Mammary epithelial cell (primary cell): ENCODE measurements at regions of chr3 and their contacts with region 1.

Region 1: DNA sequence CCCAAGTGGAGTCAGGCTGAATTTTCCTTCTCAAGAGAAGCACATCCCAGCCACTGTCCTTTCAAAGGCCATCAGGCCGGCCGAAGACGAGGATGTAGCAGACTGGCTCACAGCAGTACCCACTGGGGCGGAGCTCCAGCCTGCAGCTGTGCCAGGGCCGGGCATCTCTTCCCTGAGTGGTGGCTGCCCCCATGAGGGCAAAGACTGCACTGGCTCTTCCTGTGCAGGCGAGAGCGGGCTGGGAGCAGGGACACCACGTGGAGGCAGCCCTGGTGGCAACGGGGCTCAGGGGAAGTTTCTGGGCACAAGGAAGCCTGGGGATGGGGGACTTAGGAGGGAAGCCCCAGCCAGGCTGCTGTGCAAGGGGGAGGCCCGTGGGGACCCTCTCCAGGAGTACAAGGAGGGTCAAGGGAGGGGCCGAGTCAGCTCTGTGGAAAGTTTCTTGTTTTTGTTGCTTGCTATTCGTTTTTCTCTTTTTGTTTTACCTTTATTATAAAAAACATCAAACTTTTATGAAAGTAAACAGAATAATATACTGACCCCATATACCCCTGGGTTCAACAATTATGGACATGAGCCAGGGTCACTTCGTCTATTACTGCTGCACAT is 66.1 kb downstream of the RPN1 start:
- DNase-seq: peak; percentile 67
- H3K4me3 ChIP-seq: no peak overlapping the region
- H3K27ac ChIP-seq: no peak overlapping the region
- H3K4me1 ChIP-seq: peaks cover 2% of the 10 kb centered on the region
- H3K27me3 ChIP-seq: no peaks in the 10 kb centered on the region
- CTCF ChIP-seq: peak; percentile 84 to 94

Region 2: DNA sequence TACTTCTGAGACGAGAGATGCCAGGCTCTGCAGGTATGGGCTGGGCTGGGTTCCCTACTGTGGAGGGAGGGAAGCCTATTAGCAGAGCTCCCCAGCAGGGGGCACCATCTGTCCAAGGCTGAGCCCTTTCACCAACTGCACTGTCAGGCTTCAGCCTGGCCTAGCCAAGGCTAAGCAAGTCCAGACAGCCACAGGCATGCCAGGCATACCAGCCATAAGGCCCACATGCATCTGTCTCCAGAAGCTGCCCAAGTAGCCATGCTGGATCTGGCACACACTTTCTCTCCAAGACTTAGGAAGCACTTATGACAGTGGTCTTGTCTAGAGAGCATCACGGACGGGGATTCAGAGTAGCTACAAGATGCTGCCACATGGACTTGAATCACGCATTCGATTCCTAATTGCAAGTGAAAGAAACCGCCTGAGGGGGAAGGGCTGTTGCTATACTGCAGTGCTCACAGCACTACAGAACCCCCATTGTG is 489.3 kb before region 1 on chr3:
- CTCF ChIA-PET with region 1: no interaction called
- dilution Hi-C with region 1: loop called (anchors 10 kb)
- in situ Hi-C with region 1: loop called (anchors 10 kb)
- intact Hi-C with region 1: loop called (anchors 1 kb)
- DNase-seq: peak; percentile 86
- H3K4me3 ChIP-seq: no peak overlapping the region
- H3K27ac ChIP-seq: no peak overlapping the region
- H3K4me1 ChIP-seq: peaks cover 21% of the 10 kb centered on the region
- H3K27me3 ChIP-seq: no peaks in the 10 kb centered on the region
- CTCF ChIP-seq: peak; percentile 90 to 98

Region 3: DNA sequence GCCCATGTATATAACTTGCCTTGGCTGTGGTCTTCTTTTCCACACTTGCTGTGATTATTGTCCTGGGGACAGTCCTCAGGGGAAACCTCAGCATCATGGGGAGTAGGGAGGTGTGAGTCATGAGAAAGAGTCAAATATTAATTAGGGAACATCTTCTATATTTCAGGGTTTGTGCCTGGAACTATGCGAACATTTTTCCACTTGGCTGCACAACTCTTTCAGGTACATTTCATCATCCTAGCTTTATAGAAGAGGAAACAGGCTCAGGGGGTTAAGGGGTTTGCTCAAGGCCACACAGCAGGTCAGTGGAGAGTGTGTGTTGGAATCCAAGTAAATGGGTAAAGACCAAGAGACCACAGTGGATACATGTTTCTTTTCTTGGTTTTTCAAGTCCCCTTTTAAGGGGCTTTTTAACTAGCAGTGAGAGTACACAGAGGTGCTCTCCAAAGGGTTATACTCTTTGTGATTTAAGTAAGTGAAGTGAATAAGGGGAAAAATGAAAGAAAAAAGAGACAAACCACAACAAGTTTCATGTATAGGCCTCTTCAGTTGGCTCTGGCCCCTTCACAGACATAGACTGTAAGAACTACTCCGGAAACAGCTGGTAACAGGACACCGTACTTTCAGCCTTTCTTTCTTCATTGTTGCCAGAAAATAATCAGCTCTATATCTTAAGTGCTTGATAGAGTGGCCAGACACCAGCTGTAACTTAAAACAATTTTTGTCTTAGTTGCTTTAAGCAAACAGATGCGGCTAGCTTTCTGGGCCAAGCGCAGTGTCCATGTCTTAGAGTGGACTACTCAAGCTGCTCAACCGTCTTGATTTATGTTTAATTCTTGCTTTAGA is 366.6 kb before region 1 on chr3:
- CTCF ChIA-PET with region 1: no interaction called
- dilution Hi-C with region 1: no loop called
- in situ Hi-C with region 1: no loop called
- intact Hi-C with region 1: loop called (anchors 5 kb)
- DNase-seq: no peak
- H3K4me3 ChIP-seq: no peak overlapping the region
- H3K27ac ChIP-seq: no peak overlapping the region
- H3K4me1 ChIP-seq: no peaks in the 10 kb centered on the region
- H3K27me3 ChIP-seq: no peaks in the 10 kb centered on the region
- CTCF ChIP-seq: no peak

Region 4: GRCh38 chr3:128416578-128417211 is 167.8 kb before region 1 on chr3:
- CTCF ChIA-PET with region 1: no interaction called
- dilution Hi-C with region 1: loop called (anchors 25 kb)
- in situ Hi-C with region 1: no loop called
- intact Hi-C with region 1: no loop called
- DNase-seq: peak; percentile 77
- H3K4me3 ChIP-seq: no peak overlapping the region
- H3K27ac ChIP-seq: no peak overlapping the region
- H3K4me1 ChIP-seq: peaks cover 8% of the 10 kb centered on the region
- H3K27me3 ChIP-seq: no peaks in the 10 kb centered on the region
- CTCF ChIP-seq: no peak

Region 5: GRCh38 chr3:128438488-128439072 is 145.9 kb before region 1 on chr3:
- CTCF ChIA-PET with region 1: no interaction called
- dilution Hi-C with region 1: no loop called
- in situ Hi-C with region 1: loop called (anchors 10 to 25 kb)
- intact Hi-C with region 1: no loop called
- DNase-seq: no peak
- H3K4me3 ChIP-seq: no peak overlapping the region
- H3K27ac ChIP-seq: no peak overlapping the region
- H3K4me1 ChIP-seq: no peaks in the 10 kb centered on the region
- H3K27me3 ChIP-seq: no peaks in the 10 kb centered on the region
- CTCF ChIP-seq: peak; percentile 37

Region 6: DNA sequence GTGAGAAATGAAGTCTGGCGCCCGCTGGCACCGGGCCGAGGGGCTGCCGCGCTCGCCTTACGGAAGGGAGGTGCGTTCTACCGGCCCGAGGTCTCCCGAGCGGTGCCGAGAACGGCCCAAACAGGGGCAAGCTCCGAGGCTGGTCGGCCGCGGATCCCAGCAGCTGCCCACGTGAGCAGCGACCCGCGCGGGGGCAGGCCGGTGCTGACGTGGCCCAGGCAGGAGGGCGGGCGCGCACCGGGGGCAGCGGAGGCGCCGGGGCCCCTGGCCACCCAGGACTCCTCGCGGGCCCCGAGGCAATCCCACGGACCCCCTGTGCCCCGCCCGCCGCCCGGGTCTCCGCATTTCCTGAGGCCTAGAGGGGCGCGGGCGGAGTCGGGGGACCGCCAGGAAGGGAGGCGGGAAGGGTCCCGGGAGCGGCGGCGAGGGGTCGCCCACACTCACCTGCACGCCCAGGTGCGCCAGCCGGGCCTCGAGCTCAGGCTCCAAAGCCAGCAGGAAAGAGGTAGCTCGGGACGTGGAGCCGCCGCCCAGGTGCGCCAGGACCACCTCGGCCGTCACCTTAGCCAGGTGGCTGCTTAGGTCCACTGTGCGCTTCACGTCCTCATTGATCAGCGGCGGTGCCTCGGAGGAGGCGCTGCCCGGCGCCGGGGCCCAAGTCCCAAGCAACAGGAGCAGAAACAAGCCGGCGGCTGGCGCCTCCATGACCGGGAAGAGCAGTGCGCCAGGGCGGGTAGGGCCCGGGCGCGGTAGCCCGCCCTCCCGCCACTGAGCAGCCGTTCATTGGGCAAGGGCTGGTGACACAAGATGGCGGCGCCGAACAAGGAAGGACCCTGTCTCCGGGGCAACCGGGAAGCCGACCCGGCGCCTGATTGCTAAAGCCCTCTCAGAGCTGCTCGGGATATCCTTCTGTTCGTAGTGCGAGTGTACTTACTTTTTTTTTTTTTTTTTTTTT is 65.9 kb after region 1 on chr3 and contains the start of gene RPN1:
- CTCF ChIA-PET with region 1: no interaction called
- dilution Hi-C with region 1: no loop called
- in situ Hi-C with region 1: no loop called
- intact Hi-C with region 1: no loop called
- DNase-seq: peak; percentile 90
- H3K4me3 ChIP-seq: peak within 1 kb of the TSS; percentile 90 to 100 (median 100)
- H3K27ac ChIP-seq: peak within 1 kb of the TSS; percentile 95
- H3K4me1 ChIP-seq: peaks cover 6% of the 10 kb centered on the region
- H3K27me3 ChIP-seq: no peaks in the 10 kb centered on the region
- CTCF ChIP-seq: no peak
- total RNA-seq, gene RPN1: 206 to 305 TPM